ENCODE measurements at regions of chr12 and their contacts with region 1.

Region 1: DNA sequence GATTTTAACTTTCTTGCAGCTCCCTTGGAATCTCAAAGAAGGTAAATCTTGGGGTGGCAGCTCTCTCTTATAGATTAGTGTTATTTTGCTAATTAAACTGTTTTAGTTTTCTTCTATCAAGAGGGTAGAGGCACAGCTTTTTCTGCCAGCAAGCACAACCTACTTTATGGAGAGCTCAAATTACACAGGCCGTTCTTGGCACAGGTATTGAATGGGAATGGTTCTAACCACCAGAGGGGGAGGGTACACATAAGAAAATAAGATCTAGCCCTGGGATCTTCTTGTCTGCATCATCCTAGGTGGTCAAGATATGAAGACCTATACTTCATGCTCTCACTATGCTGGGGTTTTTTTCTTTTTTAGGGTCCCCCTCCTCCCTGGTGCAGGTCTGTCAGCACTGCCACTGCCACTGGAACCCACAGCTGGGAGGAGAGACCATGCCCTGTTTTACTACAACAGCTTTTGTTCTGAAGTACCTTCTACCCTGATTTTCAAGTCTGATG is 48.6 kb upstream of the STAC3 start:
- DNase-seq: no peak
- H3K4me3 ChIP-seq: no peak overlapping the region
- H3K27ac ChIP-seq: no peak overlapping the region
- H3K4me1 ChIP-seq: no peaks in the 10 kb centered on the region
- H3K27me3 ChIP-seq: no peaks in the 10 kb centered on the region
- CTCF ChIP-seq: no peak

Region 2: DNA sequence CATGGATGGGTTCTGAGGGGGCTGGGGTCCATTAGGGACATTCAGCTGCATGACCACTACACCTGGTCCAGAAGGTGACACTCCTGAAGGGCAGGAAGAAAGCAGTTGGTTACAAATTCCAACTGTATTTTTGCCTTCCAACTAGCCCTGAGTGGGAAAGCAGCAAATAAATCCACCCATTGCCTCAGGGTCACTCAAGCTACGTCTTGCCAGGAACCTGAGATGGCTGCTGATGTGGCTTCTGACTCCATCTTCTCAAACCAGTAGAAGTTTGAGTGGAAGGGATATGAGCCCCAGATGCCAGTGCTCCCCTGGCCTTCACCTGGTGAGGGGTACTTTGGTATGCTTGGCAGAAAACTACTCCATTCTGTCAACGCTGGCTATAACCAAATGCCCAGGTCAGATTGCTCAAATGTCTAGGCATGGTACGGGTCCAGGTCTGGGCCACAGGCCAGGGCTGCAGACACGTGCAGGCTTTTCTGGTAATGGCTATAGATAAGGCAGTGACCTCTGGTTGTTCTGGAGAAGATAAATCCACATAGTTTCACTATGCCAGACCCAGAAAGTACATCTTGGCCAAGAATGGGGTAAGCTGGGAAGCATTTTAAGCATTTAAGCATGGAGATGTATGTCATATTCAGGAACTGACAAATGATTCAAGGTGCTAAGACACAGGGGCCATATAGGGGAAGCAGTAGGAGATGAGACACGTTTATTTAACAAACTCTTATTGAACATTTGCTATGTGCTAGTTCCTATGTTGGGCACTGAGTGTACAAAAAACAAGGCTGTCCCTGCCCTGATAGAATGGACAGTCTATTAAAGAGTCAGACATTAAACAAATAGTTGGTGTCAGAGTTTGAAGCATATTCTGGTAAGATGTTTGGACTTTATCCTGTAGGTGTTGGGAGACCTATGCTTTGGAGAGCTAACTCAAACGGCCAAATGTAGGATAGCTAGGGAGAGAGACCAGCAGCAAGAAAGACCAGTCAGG is 40.3 kb before region 1 on chr12:
- CTCF ChIA-PET with region 1: no interaction called
- dilution Hi-C with region 1: loop called (anchors 5 kb)
- in situ Hi-C with region 1: no loop called
- intact Hi-C with region 1: no loop called
- DNase-seq: no peak
- H3K4me3 ChIP-seq: no peak overlapping the region
- H3K27ac ChIP-seq: no peak overlapping the region
- H3K4me1 ChIP-seq: no peaks in the 10 kb centered on the region
- H3K27me3 ChIP-seq: no peaks in the 10 kb centered on the region
- CTCF ChIP-seq: no peak

Region 3: GRCh38 chr12:57352166-57352565 is 52.6 kb after region 1 on chr12:
- CTCF ChIA-PET with region 1: no interaction called
- dilution Hi-C with region 1: loop called (anchors 5 kb)
- in situ Hi-C with region 1: no loop called
- intact Hi-C with region 1: no loop called
- DNase-seq: no peak
- H3K4me3 ChIP-seq: no peak overlapping the region
- H3K27ac ChIP-seq: no peak overlapping the region
- H3K4me1 ChIP-seq: no peaks in the 10 kb centered on the region
- H3K27me3 ChIP-seq: no peaks in the 10 kb centered on the region
- CTCF ChIP-seq: no peak

Measured in mammary epithelial cell (primary cell).